Activated B cell treated with CpG ODN at 0.5 μM for 24 hours (primary cell): ENCODE measurements at regions of chr10 and their contacts with region 1.

Region 1: GRCh38 chr10:283916-284356 is 148.7 kb downstream of the ZMYND11 start:
- DNase-seq: no peak
- ATAC-seq: peak; percentile 92
- H3K4me3 Mint-ChIP-seq: peak overlapping the region; percentile 39
- H3K27ac Mint-ChIP-seq: peak overlapping the region; percentile 73
- H3K4me1 Mint-ChIP-seq: peaks cover 19% of the 10 kb centered on the region
- H3K27me3 Mint-ChIP-seq: no peaks in the 10 kb centered on the region
- CTCF ChIP-seq: no peak

Region 2: GRCh38 chr10:299969-300368 is 16.0 kb after region 1 on chr10:
- CTCF ChIA-PET with region 1: no interaction called
- POLR2A ChIA-PET with region 1: interaction called, 4 read pairs
- intact Hi-C with region 1: loop called (anchors 1 kb)
- DNase-seq: no peak
- ATAC-seq: peak; percentile 88
- H3K4me3 Mint-ChIP-seq: peak overlapping the region; percentile 81
- H3K27ac Mint-ChIP-seq: peak overlapping the region; percentile 79
- H3K4me1 Mint-ChIP-seq: peaks cover 43% of the 10 kb centered on the region
- H3K27me3 Mint-ChIP-seq: no peaks in the 10 kb centered on the region
- CTCF ChIP-seq: no peak

Region 3: GRCh38 chr10:329361-330099 is 45.6 kb after region 1 on chr10:
- CTCF ChIA-PET with region 1: no interaction called
- POLR2A ChIA-PET with region 1: no interaction called
- intact Hi-C with region 1: loop called (anchors 5 kb)
- DNase-seq: no peak
- ATAC-seq: no peak
- H3K4me3 Mint-ChIP-seq: no peak overlapping the region
- H3K27ac Mint-ChIP-seq: no peak overlapping the region
- H3K4me1 Mint-ChIP-seq: peaks cover 51% of the 10 kb centered on the region
- H3K27me3 Mint-ChIP-seq: peaks cover 2% of the 10 kb centered on the region
- CTCF ChIP-seq: no peak

Region 4: DNA sequence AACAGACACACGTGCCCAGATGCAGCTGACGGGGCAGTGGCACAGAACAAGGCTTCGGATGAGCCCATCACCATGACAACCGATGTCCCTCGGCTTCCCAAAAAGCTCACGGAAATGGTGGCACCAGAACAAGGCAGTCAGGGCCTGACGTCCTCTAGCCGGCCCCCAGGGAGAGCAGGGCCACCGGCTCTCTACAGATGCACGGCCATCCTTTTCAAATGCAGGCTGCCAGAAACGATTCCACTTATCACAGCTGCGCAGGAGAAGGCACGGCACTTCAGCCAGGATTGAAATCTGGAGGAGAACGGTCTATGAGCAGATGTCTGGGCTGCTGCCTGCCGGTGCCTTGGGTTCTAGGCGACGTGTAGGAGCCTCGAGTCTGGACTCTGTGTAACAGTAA is 75.1 kb after region 1 on chr10:
- CTCF ChIA-PET with region 1: no interaction called
- POLR2A ChIA-PET with region 1: interaction called, 4 read pairs
- intact Hi-C with region 1: loop called (anchors 5 kb)
- DNase-seq: no peak
- ATAC-seq: no peak
- H3K4me3 Mint-ChIP-seq: no peak overlapping the region
- H3K27ac Mint-ChIP-seq: no peak overlapping the region
- H3K4me1 Mint-ChIP-seq: peaks cover 3% of the 10 kb centered on the region
- H3K27me3 Mint-ChIP-seq: peaks cover 4% of the 10 kb centered on the region
- CTCF ChIP-seq: no peak